ENCODE measurements at regions of chr11 and their contacts with region 1.

Region 1: DNA sequence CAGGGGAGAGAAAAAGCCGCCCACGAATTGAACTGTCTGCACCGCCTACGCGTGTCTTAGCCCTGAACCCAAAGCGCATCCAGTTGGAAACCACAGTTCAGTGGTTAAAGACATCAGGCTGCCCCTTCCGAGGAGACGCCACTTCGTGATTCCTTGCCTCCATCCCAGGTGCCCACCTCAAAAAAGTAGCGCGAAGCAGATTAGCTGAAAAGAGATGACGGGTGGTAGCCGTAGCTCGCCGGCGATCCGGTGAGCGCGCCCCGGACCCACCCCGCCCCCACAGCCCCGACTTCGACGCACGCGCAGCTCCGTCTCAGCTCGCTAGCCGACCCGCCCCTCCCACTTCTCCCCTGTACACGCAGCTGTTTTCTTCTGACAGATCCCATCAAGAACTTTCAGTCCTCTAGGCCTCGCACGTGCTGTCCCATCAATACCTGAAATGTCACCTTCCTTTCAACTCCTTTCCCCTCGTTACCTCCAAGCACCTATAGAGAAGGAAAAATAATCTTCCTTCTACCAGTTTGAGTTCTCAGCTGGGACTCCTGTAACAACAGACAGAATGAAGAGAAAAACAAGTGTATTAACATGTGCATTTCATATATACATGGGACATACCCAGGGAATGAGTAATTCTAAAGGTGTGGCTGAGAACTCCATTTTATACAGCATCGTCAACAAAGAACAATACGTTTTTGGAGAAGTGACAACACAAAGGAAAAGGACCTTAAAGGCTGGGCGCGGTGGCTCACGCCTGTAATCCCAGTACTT is 49.5 kb downstream of the OR4D9 start:
- DNase-seq: peak; percentile 63 to 88 (median 77)
- ATAC-seq: peak; percentile 74 to 81 (median 80)
- H3K4me3 ChIP-seq: peak overlapping the region; percentile 86 to 93
- H3K4me3 Mint-ChIP-seq: peak overlapping the region; percentile 88 to 92 (median 91)
- H3K27ac ChIP-seq: peak overlapping the region; percentile 70
- H3K27ac Mint-ChIP-seq: peak overlapping the region; percentile 96 to 97
- H3K4me1 ChIP-seq: peaks cover 9 to 39% of the 10 kb centered on the region in 2 experiments
- H3K4me1 Mint-ChIP-seq: peaks cover 38 to 52% (median 42%) of the 10 kb centered on the region in 3 donors
- H3K27me3 ChIP-seq: peaks cover 2 to 5% of the 10 kb centered on the region in 2 experiments
- H3K27me3 Mint-ChIP-seq: peaks cover 0 to 4% of the 10 kb centered on the region in 2 donors

Region 2: DNA sequence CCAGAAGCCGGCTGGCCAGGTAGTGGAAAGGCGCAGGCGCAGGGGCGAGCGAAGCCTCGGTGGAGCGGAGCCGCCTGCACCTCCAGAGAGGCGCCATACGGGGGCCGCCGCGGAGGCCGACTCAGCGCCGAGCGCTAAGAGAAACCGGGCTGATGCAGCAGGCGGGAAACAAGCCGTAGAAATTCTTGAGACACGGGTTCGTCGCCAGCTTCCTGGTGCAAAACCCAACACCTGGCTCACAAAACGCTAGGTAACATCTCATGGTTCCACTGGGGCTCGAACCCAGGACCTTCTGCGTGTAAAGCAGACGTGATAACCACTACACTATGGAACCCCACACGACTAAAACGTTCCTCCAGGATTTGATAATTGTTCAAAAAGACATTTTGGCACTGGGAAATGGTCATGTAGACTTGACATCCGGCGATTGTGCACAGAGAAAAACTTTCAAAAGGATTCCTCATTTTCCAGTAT is 10.5 kb before region 1 on chr11:
- CTCF ChIA-PET with region 1: interaction called in 1 of 2 experiments, 10 read pairs
- POLR2A ChIA-PET with region 1: interaction called in 1 of 2 experiments, 5 read pairs
- DNase-seq: peak; percentile 70 to 91 (median 82)
- ATAC-seq: peak; percentile 87 to 94 (median 92)
- H3K4me3 ChIP-seq: peak overlapping the region; percentile 73 to 90
- H3K4me3 Mint-ChIP-seq: peak overlapping the region; percentile 85 to 89 (median 87)
- H3K27ac ChIP-seq: peak overlapping the region; percentile 55
- H3K27ac Mint-ChIP-seq: peak overlapping the region; percentile 90 to 92
- H3K4me1 ChIP-seq: peaks cover 8 to 15% of the 10 kb centered on the region in 2 experiments
- H3K4me1 Mint-ChIP-seq: peaks cover 21 to 30% (median 25%) of the 10 kb centered on the region in 3 donors
- H3K27me3 ChIP-seq: no peaks in the 10 kb centered on the region
- H3K27me3 Mint-ChIP-seq: peaks cover 0 to 7% of the 10 kb centered on the region in 2 donors

Region 3: GRCh38 chr11:59601788-59602187 is 40.9 kb after region 1 on chr11:
- CTCF ChIA-PET with region 1: interaction called in 1 of 2 experiments, 14 read pairs
- POLR2A ChIA-PET with region 1: interaction called in 1 of 2 experiments, 3 read pairs
- DNase-seq: no peak
- ATAC-seq: no peak
- H3K4me3 ChIP-seq: no peak overlapping the region
- H3K4me3 Mint-ChIP-seq: no peak overlapping the region
- H3K27ac ChIP-seq: no peak overlapping the region
- H3K27ac Mint-ChIP-seq: no peak overlapping the region
- H3K4me1 ChIP-seq: no peaks in the 10 kb centered on the region
- H3K4me1 Mint-ChIP-seq: peaks cover 18 to 28% (median 24%) of the 10 kb centered on the region in 3 donors
- H3K27me3 ChIP-seq: no peaks in the 10 kb centered on the region
- H3K27me3 Mint-ChIP-seq: no peaks in the 10 kb centered on the region

Region 4: GRCh38 chr11:60121264-60121663 is 560.4 kb after region 1 on chr11:
- CTCF ChIA-PET with region 1: no interaction called
- POLR2A ChIA-PET with region 1: no interaction called
- DNase-seq: no peak
- ATAC-seq: no peak
- H3K4me3 ChIP-seq: no peak overlapping the region
- H3K4me3 Mint-ChIP-seq: no peak overlapping the region
- H3K27ac ChIP-seq: no peak overlapping the region
- H3K27ac Mint-ChIP-seq: no peak overlapping the region
- H3K4me1 ChIP-seq: no peaks in the 10 kb centered on the region
- H3K4me1 Mint-ChIP-seq: no peaks in the 10 kb centered on the region
- H3K27me3 ChIP-seq: no peaks in the 10 kb centered on the region
- H3K27me3 Mint-ChIP-seq: peaks cover 6 to 7% of the 10 kb centered on the region in 2 donors